H1 (cell line): ENCODE measurements at regions of chr16 and their contacts with region 1.

Region 1: GRCh38 chr16:84175350-84176081 is 11.3 kb downstream of the TAF1C start:
- DNase-seq: peak; percentile 34 to 90
- H3K4me3 ChIP-seq: no peak overlapping the region
- H3K27ac ChIP-seq: no peak overlapping the region
- H3K4me1 ChIP-seq: no peaks in the 10 kb centered on the region
- H3K27me3 ChIP-seq: no peaks in the 10 kb centered on the region
- CTCF ChIP-seq: peak; percentile 77 to 95 (median 92)
- EP300 ChIP-seq: no peak
- POLR2A ChIP-seq: no peak
- RAD21 ChIP-seq: peak; percentile 87 to 89

Region 2: GRCh38 chr16:84116720-84117493 is 58.6 kb before region 1 on chr16 and contains the start of gene MBTPS1:
- CTCF ChIA-PET with region 1: interaction called, 13 read pairs
- POLR2A ChIA-PET with region 1: interaction called, 7 read pairs
- DNase-seq: peak; percentile 91 to 99
- H3K4me3 ChIP-seq: peak within 1 kb of the TSS; percentile 69 to 92 (median 84)
- H3K27ac ChIP-seq: peak within 1 kb of the TSS; percentile 64
- H3K4me1 ChIP-seq: peaks cover 0 to 2% (median 0%) of the 10 kb centered on the region in 4 experiments; a peak in 1 of 7 replicates
- H3K27me3 ChIP-seq: no peaks in the 10 kb centered on the region
- CTCF ChIP-seq: no peak; a peak in 1 of 4 replicates
- EP300 ChIP-seq: no peak
- POLR2A ChIP-seq: peak in 1 of 2 experiments; percentile 85; a peak in 2 of 3 replicates
- RAD21 ChIP-seq: no peak
- total RNA-seq, gene MBTPS1: 52.0 and 53.3 TPM in 2 replicates

Region 3: DNA sequence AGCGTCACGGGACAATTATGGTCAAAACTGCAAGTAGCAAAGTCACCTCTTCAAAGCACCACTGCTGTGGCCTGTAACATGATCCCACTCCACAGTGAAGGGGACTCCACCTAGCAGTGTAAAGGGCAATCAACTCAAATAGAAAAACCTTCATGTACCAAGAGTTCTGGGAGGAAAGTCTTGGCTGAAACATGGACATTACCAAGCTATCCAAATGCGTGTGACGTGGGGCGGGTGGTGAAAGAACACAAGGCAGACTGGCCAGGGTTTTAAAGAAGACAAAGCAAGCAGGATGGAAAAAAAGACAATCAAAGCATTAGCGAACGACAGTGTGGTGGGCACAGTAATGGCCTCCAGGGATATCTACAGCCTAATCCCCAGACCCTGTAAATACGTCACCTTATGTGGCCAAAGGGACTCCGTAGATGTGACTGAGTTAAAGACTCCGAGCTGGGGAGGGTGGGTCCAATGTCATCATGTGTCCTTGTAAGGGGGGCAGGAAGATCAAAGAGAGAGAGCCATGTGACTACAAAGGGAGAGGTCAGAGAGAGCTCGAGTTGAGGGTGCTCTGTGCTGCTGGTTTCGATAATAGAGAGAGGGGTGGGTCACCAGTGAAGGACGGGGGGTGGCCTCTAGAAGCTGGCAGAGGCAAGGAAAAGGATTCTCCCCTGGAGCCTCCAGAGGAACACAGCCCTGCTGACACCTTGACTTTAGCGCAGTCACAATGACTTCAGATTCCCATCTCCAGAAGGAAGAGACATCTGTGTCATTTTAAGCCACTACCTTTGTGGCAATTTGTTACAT is 36.5 kb before region 1 on chr16:
- CTCF ChIA-PET with region 1: interaction called, 18 read pairs
- POLR2A ChIA-PET with region 1: no interaction called
- DNase-seq: no peak
- H3K4me3 ChIP-seq: peak overlapping the region in 2 of 4 experiments; percentile 1 to 16; a peak in 2 of 8 replicates
- H3K27ac ChIP-seq: no peak overlapping the region; the same call in 1 of the 2 replicates
- H3K4me1 ChIP-seq: peaks cover 11 to 28% (median 18%) of the 10 kb centered on the region in 4 experiments
- H3K27me3 ChIP-seq: no peaks in the 10 kb centered on the region
- CTCF ChIP-seq: no peak
- EP300 ChIP-seq: no peak
- POLR2A ChIP-seq: no peak
- RAD21 ChIP-seq: no peak

Region 4: DNA sequence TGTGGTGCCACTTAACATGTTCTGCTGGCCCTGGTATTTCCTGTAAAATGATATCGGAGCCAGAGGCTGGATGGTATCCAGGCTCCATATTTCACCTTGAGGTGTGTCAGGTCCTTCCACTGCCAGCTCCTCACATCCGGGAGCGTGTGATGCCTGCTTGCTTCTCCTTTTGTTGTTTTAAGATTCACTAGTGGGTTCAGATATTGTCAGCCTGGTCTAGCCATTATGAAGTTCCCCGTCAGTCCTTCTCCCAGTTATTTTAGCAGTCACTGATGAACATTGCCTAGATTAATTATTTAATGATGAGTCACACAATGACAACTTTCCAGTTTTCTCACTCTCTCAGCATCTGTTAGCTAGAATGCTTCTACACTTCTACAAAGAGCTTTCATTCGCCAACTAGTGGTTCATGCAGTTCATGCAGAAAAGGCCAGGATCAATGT is 19.2 kb before region 1 on chr16:
- CTCF ChIA-PET with region 1: interaction called, 32 read pairs
- POLR2A ChIA-PET with region 1: interaction called, 4 read pairs
- DNase-seq: no peak
- H3K4me3 ChIP-seq: no peak overlapping the region
- H3K27ac ChIP-seq: no peak overlapping the region
- H3K4me1 ChIP-seq: no peaks in the 10 kb centered on the region
- H3K27me3 ChIP-seq: no peaks in the 10 kb centered on the region
- CTCF ChIP-seq: no peak
- EP300 ChIP-seq: no peak
- POLR2A ChIP-seq: no peak
- RAD21 ChIP-seq: 0 out of 4 replicates have a peak, but pooled peaks of 1 of the 2 experiments have one; percentile 3

Region 5: DNA sequence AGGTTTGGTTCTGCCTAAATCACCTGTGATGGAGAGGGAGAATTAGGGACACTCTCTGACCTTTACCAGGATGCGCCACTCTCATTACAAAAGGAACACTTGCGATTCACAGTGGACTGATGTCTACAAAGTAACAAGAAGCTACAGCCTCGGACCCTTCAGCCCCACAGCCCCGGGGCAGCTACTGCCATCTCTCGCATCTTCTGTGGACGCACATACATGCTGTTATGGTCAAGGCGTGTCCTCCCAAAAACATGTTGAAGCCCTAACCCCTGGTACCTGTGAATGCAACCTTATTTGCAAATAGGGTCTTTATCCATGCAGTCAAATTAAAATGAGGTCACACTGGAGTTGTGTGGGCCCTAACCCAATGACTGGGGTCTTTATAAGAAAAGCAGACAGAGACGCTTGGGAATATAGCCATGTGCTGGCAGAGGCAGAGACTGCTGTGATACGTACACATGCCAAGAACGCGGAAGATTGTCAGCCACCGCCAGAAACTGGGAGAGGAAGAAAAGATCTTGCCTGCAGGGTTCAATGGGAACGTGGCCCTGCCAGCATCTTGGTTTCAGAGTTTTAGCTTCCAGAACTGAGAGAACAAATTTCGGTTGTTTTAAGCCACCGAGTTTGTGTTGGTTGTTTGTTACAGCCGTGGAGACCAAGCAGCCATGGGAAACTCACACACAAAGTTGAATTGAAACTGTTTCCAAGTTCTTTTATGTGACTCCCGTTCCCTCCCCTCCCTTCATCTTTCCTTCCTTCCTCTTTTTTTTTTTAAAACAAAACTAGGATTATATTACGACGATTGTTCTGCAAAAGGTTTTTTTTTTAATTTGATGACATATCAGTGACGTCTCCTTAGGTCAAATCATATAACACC is 215.9 kb after region 1 on chr16:
- CTCF ChIA-PET with region 1: no interaction called
- POLR2A ChIA-PET with region 1: no interaction called
- DNase-seq: no peak
- H3K4me3 ChIP-seq: no peak overlapping the region
- H3K27ac ChIP-seq: no peak overlapping the region
- H3K4me1 ChIP-seq: peaks cover 0 to 4% (median under 1%) of the 10 kb centered on the region in 4 experiments; a peak in 1 of 7 replicates
- H3K27me3 ChIP-seq: no peaks in the 10 kb centered on the region
- CTCF ChIP-seq: no peak
- EP300 ChIP-seq: no peak
- POLR2A ChIP-seq: no peak
- RAD21 ChIP-seq: no peak

Region 6: GRCh38 chr16:84484579-84485254 is 309.2 kb after region 1 on chr16:
- CTCF ChIA-PET with region 1: interaction called, 13 read pairs
- POLR2A ChIA-PET with region 1: no interaction called
- DNase-seq: peak in 1 of 2 experiments; percentile 73
- H3K4me3 ChIP-seq: no peak overlapping the region
- H3K27ac ChIP-seq: no peak overlapping the region
- H3K4me1 ChIP-seq: no peaks in the 10 kb centered on the region
- H3K27me3 ChIP-seq: no peaks in the 10 kb centered on the region
- CTCF ChIP-seq: peak; percentile 88 to 89 (median 88)
- EP300 ChIP-seq: no peak
- POLR2A ChIP-seq: no peak
- RAD21 ChIP-seq: peak; percentile 99

Region 7: DNA sequence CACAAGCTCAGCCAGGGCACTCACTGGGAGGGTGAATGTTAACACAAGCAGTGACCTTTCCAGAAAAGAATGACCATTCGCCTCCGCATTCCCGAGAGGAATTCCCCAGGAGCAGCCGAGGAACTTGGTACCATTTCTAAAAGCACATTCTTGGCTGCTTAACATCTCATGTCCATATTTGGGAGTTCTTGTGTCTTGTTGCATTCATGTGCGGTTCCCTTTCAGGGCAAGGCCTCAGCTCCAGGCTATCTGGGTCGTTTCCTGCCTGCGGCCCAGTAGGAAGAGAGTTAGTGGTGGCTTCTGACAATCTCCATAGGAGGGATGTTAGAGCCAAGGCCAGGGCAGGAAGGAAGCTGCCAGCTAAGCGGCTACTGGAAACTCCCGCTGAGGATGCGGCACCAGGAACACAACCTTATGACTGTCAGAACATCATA is 356.8 kb after region 1 on chr16:
- CTCF ChIA-PET with region 1: no interaction called
- POLR2A ChIA-PET with region 1: no interaction called
- DNase-seq: peak in 1 of 2 experiments; percentile 87
- H3K4me3 ChIP-seq: no peak overlapping the region
- H3K27ac ChIP-seq: peak overlapping the region; percentile 4; the same call in 1 of the 2 replicates
- H3K4me1 ChIP-seq: peaks cover 13 to 30% (median 18%) of the 10 kb centered on the region in 4 experiments
- H3K27me3 ChIP-seq: no peaks in the 10 kb centered on the region; a peak in 1 of 7 replicates
- CTCF ChIP-seq: no peak
- EP300 ChIP-seq: no peak
- POLR2A ChIP-seq: no peak
- RAD21 ChIP-seq: no peak